AG04450 (cell line): ENCODE measurements at regions of chr6 and their contacts with region 1.

Region 1: GRCh38 chr6:41367700-41368099 is 32.3 kb downstream of the NCR2 start:
- DNase-seq: peak; percentile 13
- H3K4me3 ChIP-seq: no peak overlapping the region
- H3K27ac ChIP-seq: no peak overlapping the region
- H3K27me3 ChIP-seq: peaks cover 41% of the 10 kb centered on the region
- CTCF ChIP-seq: peak; percentile 80

Region 2: DNA sequence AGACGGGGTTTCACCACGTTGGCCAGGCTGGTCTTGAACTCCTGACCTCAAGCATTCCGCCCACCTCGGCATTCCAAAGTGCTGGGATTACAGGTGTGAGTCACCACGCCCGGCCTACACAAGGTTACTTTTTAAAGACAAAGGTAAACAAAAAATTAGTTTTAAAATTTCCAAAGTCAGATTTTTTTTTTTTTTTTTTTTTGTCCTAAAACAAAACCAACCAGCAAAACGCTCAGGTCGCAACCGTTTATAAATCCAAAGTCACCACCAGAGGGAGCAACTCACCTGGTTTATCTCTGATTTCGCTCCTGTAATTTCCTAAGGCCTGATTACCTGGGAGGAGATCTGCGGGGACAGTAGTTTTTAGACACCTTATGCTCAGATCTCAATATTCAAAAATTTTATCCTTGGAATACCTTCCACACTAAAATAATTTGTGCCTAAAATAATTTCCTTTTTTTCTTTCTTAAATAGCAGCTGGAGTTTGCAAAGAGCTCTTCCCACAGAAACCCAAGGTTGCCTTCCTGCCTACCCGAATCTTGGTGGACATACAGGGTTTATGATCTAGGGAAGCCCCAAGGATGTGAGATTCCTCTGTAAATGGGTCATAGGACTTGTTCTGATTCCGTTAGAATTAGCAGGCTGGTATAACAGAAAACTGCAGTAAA is 61.4 kb before region 1 on chr6:
- CTCF ChIA-PET with region 1: interaction called, 13 read pairs
- POLR2A ChIA-PET with region 1: no interaction called
- DNase-seq: no peak
- H3K4me3 ChIP-seq: no peak overlapping the region
- H3K27ac ChIP-seq: no peak overlapping the region
- H3K27me3 ChIP-seq: peaks cover 15% of the 10 kb centered on the region
- CTCF ChIP-seq: peak; percentile 64

Region 3: GRCh38 chr6:41581381-41581991 is 213.8 kb after region 1 on chr6:
- CTCF ChIA-PET with region 1: interaction called, 19 read pairs
- POLR2A ChIA-PET with region 1: interaction called, 3 read pairs
- DNase-seq: peak; percentile 59
- H3K4me3 ChIP-seq: no peak overlapping the region
- H3K27ac ChIP-seq: peak overlapping the region; percentile 55
- H3K27me3 ChIP-seq: no peaks in the 10 kb centered on the region
- CTCF ChIP-seq: no peak

Region 4: DNA sequence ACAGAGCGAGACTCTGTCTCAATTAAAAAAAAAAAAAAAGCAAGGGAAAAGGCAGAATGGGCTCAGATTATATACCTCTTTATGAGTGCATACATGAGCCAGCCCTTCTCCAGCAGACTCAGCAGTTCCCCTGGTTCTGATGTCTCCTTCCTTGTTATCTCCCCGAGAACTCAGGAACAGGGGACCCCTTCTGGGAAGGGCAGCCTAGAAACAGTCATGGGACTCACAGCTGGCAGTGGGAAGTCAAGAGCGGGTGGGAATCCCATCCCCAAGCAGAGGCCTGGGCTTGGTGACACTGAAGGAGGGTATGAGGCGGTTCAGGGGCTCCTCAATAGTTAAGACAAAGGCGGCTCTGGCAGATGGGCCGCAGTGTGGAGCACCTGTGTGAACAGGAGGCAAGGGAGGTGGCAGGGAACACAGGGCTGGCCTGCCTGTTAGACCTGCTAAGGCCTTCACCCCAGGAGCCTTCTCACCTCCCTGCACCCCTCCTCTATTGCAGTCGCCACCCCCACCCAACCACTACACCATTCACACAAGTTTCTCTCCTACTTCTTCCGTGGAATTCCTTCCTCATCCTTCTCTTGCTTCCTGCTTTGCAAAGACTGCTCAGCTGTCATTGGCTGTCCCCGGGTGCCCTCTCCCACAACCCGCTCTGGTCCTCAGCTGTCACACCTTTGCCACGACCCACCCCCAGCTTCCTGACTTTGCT is 240.9 kb after region 1 on chr6:
- CTCF ChIA-PET with region 1: interaction called, 195 read pairs
- POLR2A ChIA-PET with region 1: no interaction called
- DNase-seq: no peak
- H3K4me3 ChIP-seq: no peak overlapping the region
- H3K27ac ChIP-seq: no peak overlapping the region
- H3K27me3 ChIP-seq: no peaks in the 10 kb centered on the region
- CTCF ChIP-seq: no peak

Region 5: GRCh38 chr6:41689171-41690008 is 321.7 kb after region 1 on chr6:
- CTCF ChIA-PET with region 1: interaction called, 122 read pairs
- POLR2A ChIA-PET with region 1: no interaction called
- DNase-seq: no peak
- H3K4me3 ChIP-seq: no peak overlapping the region
- H3K27ac ChIP-seq: no peak overlapping the region
- H3K27me3 ChIP-seq: no peaks in the 10 kb centered on the region
- CTCF ChIP-seq: no peak

Region 6: DNA sequence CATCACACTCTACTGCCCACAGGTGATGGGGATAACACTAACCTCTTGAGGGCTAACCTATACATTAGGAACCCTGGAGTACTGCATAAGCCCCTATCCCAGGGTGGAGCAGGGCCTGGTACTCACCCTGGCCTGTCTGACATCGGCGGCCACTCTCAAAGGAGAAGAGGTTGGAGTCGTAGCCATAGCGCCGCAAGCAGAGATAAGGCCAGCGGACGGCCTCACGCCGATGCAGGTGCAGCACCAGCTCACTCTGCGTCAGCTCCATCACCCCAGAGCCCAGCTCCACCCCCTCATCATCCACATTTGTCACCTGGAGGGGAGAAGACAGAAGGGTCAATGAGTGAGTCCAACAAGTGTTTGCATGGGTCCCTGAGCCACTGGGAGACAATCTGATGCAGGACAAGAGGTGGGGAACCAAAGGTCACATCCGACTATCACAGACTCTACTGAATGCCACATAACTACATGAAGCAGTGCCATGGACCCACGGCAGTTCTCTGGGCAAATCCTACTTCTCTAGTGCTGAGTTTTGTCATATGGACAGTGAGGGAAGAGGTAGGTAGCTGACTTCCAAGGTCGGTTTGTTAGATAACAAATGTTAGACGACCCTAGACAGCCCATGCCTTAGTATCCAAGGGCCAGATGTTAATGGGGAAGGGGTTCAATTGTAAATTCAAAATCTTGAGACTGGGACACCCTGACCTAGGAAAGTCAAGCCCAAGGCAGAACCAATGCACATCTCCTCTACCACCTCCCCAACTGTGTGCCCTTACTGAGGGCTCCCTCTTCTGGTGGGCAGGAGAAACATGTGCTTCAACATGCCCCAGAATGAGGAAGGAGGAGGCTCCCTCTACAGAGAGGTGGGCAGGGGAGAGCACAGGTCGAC is 407.8 kb after region 1 on chr6:
- CTCF ChIA-PET with region 1: interaction called, 10 read pairs
- POLR2A ChIA-PET with region 1: no interaction called
- DNase-seq: no peak
- H3K4me3 ChIP-seq: no peak overlapping the region
- H3K27ac ChIP-seq: no peak overlapping the region
- H3K27me3 ChIP-seq: no peaks in the 10 kb centered on the region
- CTCF ChIP-seq: peak; percentile 83